H1 (cell line): ENCODE measurements at regions of chr2 and their contacts with region 1.

Region 1: GRCh38 chr2:190343500-190344275 is at the start of gene INPP1:
- DNase-seq: peak in 1 of 2 experiments; percentile 81
- H3K4me3 ChIP-seq: peak within 1 kb of the TSS; percentile 37 to 76 (median 58)
- H3K27ac ChIP-seq: no peak within 1 kb of the TSS
- H3K4me1 ChIP-seq: 0 out of 7 replicates have a peak, but pooled peaks cover 0 to 7% (median 0%) of the 10 kb centered on the region in 4 experiments
- H3K27me3 ChIP-seq: peaks cover 0 to 15% (median 8%) of the 10 kb centered on the region in 4 experiments; a peak in 5 of 7 replicates
- CTCF ChIP-seq: no peak
- EP300 ChIP-seq: no peak
- POLR2A ChIP-seq: no peak
- RAD21 ChIP-seq: no peak
- total RNA-seq, gene INPP1: 2.5 and 3.0 TPM in 2 replicates

Region 2: DNA sequence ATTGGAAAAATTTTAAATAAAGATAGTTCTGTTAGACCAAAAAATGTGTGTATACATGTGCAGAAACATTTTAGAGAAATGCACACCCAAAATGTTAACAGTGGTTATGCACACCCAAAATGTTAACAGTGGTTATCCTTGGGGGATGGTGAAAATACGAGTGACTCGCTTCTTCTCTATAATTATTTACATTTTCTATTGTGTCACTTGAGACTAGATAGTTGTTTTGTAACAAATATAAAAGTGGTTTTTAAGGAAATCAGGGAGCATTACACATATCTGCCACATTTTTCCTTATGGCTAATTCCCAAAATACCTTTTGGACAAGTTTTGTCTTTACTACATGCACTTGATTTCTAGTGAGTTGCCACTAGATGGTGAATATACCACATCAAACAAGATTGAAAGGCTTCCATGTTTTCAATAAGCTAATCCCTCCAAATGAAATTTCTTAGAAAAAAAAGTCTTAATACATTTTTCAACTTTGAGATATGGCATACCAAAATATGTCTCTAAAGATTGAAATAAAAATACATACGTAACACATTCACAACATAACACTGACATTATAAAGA is 15.0 kb before region 1 on chr2:
- CTCF ChIA-PET with region 1: no interaction called
- POLR2A ChIA-PET with region 1: no interaction called
- DNase-seq: no peak
- H3K4me3 ChIP-seq: no peak overlapping the region
- H3K27ac ChIP-seq: no peak overlapping the region
- H3K4me1 ChIP-seq: no peaks in the 10 kb centered on the region
- H3K27me3 ChIP-seq: no peaks in the 10 kb centered on the region
- CTCF ChIP-seq: no peak
- EP300 ChIP-seq: no peak
- POLR2A ChIP-seq: no peak
- RAD21 ChIP-seq: peak in 1 of 2 experiments; percentile 19; a peak in 3 of 4 replicates

Region 3: DNA sequence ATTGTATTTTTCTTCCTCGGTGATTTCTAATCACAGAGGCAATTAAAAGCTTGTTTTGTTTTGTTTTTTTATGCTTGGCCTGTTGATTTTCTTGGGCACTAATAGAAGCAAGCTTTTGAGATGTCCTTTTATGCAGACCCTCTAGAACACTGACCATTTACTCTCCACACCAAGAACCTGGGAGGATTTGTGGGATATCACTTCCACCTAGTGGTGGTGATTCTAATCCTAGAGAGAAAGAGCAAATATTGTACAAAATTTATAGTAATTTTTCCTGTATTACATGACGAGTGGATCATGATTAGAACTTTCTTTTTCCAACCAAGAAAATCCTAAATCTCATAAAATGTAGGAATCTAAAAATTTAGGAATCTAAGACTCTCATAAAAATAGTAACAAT is 167.4 kb after region 1 on chr2:
- CTCF ChIA-PET with region 1: interaction called, 10 read pairs
- POLR2A ChIA-PET with region 1: no interaction called
- DNase-seq: no peak
- H3K4me3 ChIP-seq: no peak overlapping the region
- H3K27ac ChIP-seq: no peak overlapping the region
- H3K4me1 ChIP-seq: no peaks in the 10 kb centered on the region
- H3K27me3 ChIP-seq: no peaks in the 10 kb centered on the region
- CTCF ChIP-seq: peak in 2 of 3 experiments; percentile 24 to 45; a peak in 2 of 4 replicates
- EP300 ChIP-seq: no peak
- POLR2A ChIP-seq: no peak
- RAD21 ChIP-seq: peak; percentile 73 to 76